ENCODE measurements at regions of chr3 and their contacts with region 1.

Region 1: DNA sequence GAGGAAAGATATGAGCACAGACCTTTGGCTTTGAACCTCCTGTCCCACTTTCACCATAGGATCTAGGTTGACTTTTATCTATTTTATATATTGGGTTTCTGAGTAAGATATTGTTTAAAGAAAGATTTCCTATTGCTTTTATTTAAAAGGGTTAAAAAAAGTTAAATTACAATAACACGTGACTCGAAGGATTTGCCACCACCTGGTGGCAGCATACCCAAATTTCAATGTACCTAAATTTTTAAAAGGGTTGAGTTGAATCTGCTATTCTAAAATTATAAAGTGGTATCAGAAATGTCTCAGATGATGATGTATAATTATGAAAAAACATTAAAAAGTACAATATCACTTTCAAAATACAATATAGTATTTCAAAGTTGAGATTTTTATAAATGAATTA is 368.4 kb downstream of the MECOM start:
- DNase-seq: peak in 2 of 3 donors; percentile 29 to 63
- ATAC-seq: no peak
- H3K4me3 ChIP-seq: no peak overlapping the region
- H3K4me1 ChIP-seq: peaks cover 10% of the 10 kb centered on the region
- CTCF ChIP-seq: peak; percentile 19

Region 2: GRCh38 chr3:169497567-169498257 is 202.6 kb after region 1 on chr3:
- intact Hi-C with region 1: no loop called
- DNase-seq: no peak
- ATAC-seq: no peak
- H3K4me3 ChIP-seq: no peak overlapping the region
- H3K4me1 ChIP-seq: no peaks in the 10 kb centered on the region
- CTCF ChIP-seq: no peak

Region 3: DNA sequence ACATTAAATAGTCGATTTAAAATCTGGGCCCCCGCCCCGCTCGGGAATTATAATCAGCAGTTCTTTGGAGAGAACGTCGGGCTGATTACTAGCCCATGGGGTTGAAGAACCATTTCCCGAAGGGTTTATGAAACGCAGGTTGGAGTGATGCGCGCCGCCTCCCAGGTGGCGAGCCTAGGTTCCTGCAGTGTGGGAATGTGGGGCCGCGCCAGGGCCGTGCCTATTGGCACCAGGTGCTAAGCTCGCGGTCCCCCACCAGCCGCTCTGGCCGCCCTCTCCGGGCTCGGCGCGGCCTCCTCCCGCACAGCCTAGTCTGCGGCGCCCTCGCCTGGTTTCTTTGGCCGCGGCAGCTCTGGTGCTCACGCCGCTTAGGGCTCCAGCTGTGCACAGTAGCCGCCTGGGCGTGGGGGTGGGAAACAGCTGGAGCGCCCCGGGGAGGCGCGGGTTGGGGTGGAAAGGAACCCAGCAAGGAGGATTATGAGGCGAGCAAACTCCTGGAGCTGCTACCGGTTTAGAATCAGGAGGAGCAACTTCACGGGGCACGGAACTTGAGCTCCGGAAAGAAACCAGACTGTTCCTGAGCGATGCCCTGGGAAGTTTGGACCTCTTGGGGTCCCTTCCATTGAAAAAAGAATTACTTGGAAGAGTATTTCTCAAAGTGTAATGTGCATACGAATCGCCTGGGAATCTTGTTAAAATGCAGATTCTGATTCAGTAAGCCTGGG is 374.0 kb after region 1 on chr3:
- intact Hi-C with region 1: loop called in 1 of 2 experiments (anchors 10 kb)
- DNase-seq: peak; percentile 84 to 88 (median 85)
- ATAC-seq: peak; percentile 93
- H3K4me3 ChIP-seq: no peak overlapping the region
- H3K4me1 ChIP-seq: peaks cover 11% of the 10 kb centered on the region
- CTCF ChIP-seq: peak; percentile 68